Sigmoid colon (tissue), 7 donors: ENCODE measurements at regions of chrX and their contacts with region 1.

Region 1: GRCh38 chrX:23554304-23554703 is 113.0 kb upstream of the PRDX4 start:
- DNase-seq: no peak
- H3K4me3 ChIP-seq: no peak overlapping the region
- H3K27ac ChIP-seq: no peak overlapping the region
- H3K4me1 ChIP-seq: no peaks in the 10 kb centered on the region
- H3K27me3 ChIP-seq: no peaks in the 10 kb centered on the region
- CTCF ChIP-seq: peak in 3 of 4 experiments; percentile 25 to 35 (median 29)
- EP300 ChIP-seq: no peak
- POLR2A ChIP-seq: no peak

Region 2: DNA sequence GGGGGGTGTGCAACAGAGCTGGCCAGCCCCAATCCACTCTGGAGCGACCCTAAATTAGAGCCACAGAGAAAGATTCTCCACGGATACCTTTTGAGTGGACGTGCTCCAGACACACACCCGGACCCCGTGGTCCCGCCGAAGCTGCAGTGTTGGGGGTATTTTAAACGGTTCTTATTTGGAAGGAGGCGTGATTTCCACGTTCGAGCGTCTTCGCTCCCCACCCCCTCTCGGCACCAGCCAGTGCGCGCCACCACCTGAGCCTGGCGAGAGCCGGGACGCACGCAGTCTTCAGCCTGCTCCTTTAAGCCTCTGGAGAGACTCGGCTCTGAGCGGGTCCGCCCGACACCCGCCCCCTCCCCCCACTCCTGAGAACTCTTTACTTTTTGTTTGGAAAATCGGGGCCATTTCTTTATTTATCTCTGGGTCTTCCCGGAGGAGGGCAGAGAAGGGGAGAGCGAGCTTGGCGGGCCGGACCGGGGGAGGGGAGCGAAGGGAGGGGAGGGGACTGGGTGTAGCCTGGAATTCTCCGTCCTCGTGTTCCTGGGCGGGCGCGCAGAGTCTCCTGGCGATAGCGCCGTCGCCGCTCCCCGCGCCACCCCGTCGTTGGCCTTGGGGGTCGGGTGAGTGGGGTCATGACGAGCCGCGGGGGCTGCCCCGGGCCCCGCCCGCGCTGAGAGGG is 220.3 kb before region 1 on chrX:
- intact Hi-C with region 1: loop called (anchors 10 kb)
- DNase-seq: peak; percentile 71
- H3K4me3 ChIP-seq: peak overlapping the region; percentile 45 to 61 (median 56)
- H3K27ac ChIP-seq: peak overlapping the region; percentile 3 to 80 (median 74)
- H3K4me1 ChIP-seq: no peaks in the 10 kb centered on the region
- H3K27me3 ChIP-seq: no peaks in the 10 kb centered on the region
- CTCF ChIP-seq: no peak
- EP300 ChIP-seq: no peak
- POLR2A ChIP-seq: no peak